ENCODE measurements at regions of chr6 and their contacts with region 1.

Region 1: GRCh38 chr6:130843575-130844320 is 16.5 kb downstream of the SMLR1 start:
- DNase-seq: peak; percentile 52 to 79 (median 71)
- H3K4me3 ChIP-seq: no peak overlapping the region
- H3K27ac ChIP-seq: no peak overlapping the region
- H3K4me1 ChIP-seq: peaks cover 0 to 8% (median 4%) of the 10 kb centered on the region in 4 experiments
- H3K27me3 ChIP-seq: no peaks in the 10 kb centered on the region

Region 2: DNA sequence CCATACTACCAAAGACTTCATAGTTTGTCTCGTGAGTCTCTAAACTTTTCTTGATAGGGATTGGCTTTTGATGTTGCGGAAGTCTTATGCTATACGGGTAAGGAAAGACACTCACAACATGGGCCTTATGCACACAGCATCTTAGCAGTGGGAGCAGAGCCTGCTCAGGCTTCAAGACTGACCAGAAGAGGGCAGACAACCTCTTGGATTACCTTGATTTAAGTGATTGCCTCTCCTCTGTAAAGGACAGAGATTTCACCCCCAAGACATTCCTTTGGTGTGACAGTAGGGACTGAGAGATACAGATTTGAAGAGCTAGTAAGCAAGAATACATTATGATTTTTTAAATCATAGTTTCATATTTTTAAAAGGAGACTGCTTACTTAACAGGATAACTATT is 549.9 kb before region 1 on chr6:
- CTCF ChIA-PET with region 1: interaction called, 12 read pairs
- POLR2A ChIA-PET with region 1: no interaction called
- DNase-seq: peak; percentile 37 to 70 (median 60)
- H3K4me3 ChIP-seq: no peak overlapping the region
- H3K27ac ChIP-seq: no peak overlapping the region
- H3K4me1 ChIP-seq: no peaks in the 10 kb centered on the region
- H3K27me3 ChIP-seq: no peaks in the 10 kb centered on the region

Region 3: DNA sequence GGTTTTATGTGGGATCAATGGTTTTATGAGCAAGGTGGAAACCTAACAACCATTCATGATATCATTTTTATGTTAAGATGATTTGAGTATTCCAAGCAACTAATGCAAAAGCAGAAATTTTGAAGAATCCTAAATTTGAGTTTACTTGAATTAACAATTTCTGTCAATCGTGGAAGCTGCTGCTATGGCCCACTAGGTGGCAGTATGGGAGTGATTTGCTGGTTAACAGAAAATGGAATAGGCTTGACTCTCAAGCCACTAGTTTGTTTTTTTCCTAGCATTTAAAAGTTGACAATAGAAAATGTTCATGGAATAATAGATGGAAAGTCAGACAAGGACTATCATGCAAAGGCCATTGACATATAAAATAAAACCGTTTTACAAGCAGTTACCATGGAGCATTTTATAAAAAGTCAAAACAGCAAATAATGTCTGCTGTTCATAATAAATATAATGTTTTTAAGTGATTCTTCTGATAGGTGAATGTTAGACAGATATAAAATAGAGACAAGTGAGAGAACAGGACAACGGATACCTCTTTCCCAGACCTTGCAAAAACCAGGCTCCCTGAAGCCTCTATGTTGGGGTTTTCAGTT is 521.0 kb before region 1 on chr6:
- CTCF ChIA-PET with region 1: interaction called, 26 read pairs
- POLR2A ChIA-PET with region 1: no interaction called
- DNase-seq: peak; percentile 62 to 84 (median 79)
- H3K4me3 ChIP-seq: no peak overlapping the region
- H3K27ac ChIP-seq: no peak overlapping the region
- H3K4me1 ChIP-seq: peaks cover 0 to 5% (median 1%) of the 10 kb centered on the region in 4 experiments
- H3K27me3 ChIP-seq: no peaks in the 10 kb centered on the region

Region 4: DNA sequence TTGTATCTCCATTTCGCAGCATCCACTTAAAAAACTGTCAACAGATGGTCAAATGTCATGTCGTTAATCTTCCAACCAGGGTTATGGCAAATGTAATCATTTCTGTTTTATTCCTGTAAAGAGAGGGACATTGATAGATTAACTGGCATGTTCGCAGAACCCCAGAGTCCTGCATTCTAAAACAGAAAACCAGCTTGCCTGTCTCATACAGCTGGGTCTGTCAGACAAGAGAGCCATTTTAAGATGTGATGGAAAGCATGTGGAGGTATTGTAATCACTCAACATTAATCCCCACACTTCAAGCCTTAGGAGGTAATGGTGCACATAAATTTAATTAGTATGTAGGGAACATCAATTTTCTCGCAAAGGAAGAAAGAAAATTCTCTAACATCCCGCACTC is 12.1 kb before region 1 on chr6:
- CTCF ChIA-PET with region 1: interaction called, 11 read pairs
- POLR2A ChIA-PET with region 1: no interaction called
- DNase-seq: no peak
- H3K4me3 ChIP-seq: no peak overlapping the region
- H3K27ac ChIP-seq: no peak overlapping the region
- H3K4me1 ChIP-seq: peaks cover 0 to 12% (median 1%) of the 10 kb centered on the region in 4 experiments
- H3K27me3 ChIP-seq: no peaks in the 10 kb centered on the region

Region 5: GRCh38 chr6:130872250-130873095 is 28.7 kb after region 1 on chr6:
- CTCF ChIA-PET with region 1: no interaction called
- POLR2A ChIA-PET with region 1: no interaction called
- DNase-seq: peak; percentile 37 to 70 (median 58)
- H3K4me3 ChIP-seq: no peak overlapping the region
- H3K27ac ChIP-seq: no peak overlapping the region
- H3K4me1 ChIP-seq: no peaks in the 10 kb centered on the region
- H3K27me3 ChIP-seq: no peaks in the 10 kb centered on the region

Region 6: DNA sequence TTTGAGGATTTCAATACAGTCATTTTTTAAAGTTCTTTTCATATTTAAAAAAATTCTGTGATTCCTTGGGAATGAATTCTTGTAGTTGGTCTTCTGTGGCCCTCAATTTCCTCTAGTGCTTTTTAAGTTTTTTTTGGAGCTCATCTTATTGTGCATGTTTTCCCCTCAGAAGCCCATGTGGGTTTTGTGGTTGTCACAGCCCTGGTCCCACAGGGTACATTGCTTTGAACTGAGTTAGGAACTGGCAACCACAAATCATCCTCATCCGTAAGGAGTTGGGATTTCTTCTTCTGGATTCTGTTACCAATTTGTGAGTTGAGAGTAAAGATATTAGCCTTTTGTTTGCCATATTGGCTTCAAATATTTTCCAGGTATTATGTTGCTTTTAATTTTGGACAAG is 381.4 kb after region 1 on chr6:
- CTCF ChIA-PET with region 1: no interaction called
- POLR2A ChIA-PET with region 1: no interaction called
- DNase-seq: peak in 2 of 3 donors; percentile 30 to 33
- H3K4me3 ChIP-seq: no peak overlapping the region
- H3K27ac ChIP-seq: no peak overlapping the region
- H3K4me1 ChIP-seq: peaks cover 0 to 5% (median 0%) of the 10 kb centered on the region in 4 experiments
- H3K27me3 ChIP-seq: no peaks in the 10 kb centered on the region

Measured in common myeloid progenitor, CD34-positive (primary cell).